ENCODE measurements at regions of chr9 and their contacts with region 1.

Region 1: GRCh38 chr9:99266255-99267023 is 44.4 kb downstream of the SEC61B start:
- DNase-seq: peak; percentile 41
- H3K4me3 Mint-ChIP-seq: peak overlapping the region; percentile 13
- H3K27ac Mint-ChIP-seq: peak overlapping the region; percentile 51
- H3K4me1 Mint-ChIP-seq: peaks cover 33% of the 10 kb centered on the region
- H3K27me3 Mint-ChIP-seq: peaks cover 10% of the 10 kb centered on the region

Region 2: GRCh38 chr9:99231711-99232110 is 34.7 kb before region 1 on chr9:
- intact Hi-C with region 1: loop called (anchors 5 kb)
- DNase-seq: no peak
- H3K4me3 Mint-ChIP-seq: no peak overlapping the region
- H3K27ac Mint-ChIP-seq: no peak overlapping the region
- H3K4me1 Mint-ChIP-seq: peaks cover 15% of the 10 kb centered on the region
- H3K27me3 Mint-ChIP-seq: no peaks in the 10 kb centered on the region

Region 3: GRCh38 chr9:99474186-99474585 is 207.7 kb after region 1 on chr9:
- intact Hi-C with region 1: loop called (anchors 10 kb)
- DNase-seq: no peak
- H3K4me3 Mint-ChIP-seq: no peak overlapping the region
- H3K27ac Mint-ChIP-seq: no peak overlapping the region
- H3K4me1 Mint-ChIP-seq: peaks cover 33% of the 10 kb centered on the region
- H3K27me3 Mint-ChIP-seq: no peaks in the 10 kb centered on the region

Region 4: DNA sequence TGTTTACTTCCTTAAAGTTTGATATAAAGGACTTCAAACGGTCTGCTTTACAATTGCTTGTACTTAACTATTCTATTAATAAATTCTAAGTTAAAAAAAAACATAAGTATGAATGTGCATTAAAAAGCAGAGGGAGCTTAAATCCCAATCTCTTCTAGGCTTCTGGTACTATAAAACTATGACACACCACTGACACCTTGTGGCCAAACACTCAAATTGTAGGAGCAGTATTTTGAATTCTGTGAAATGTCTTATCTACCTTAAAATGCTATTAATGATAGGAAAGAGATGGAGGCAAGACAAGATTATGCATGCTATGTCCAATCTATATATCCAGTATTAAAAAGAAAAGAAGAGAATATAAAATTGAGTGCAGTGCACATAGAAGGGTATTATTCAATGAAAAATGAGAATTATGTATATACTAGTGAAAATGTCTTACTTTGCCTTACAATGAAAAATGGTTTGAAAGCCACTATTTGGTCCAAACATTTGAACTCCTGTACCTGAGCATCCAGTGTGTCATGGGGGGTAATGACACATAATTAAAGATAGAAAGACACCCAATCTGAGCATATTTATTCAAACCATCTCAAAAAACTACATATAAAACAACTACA is 744.7 kb after region 1 on chr9:
- intact Hi-C with region 1: loop called (anchors 2 kb)
- DNase-seq: no peak
- H3K4me3 Mint-ChIP-seq: no peak overlapping the region
- H3K27ac Mint-ChIP-seq: no peak overlapping the region
- H3K4me1 Mint-ChIP-seq: no peaks in the 10 kb centered on the region
- H3K27me3 Mint-ChIP-seq: no peaks in the 10 kb centered on the region